PC-9 (cell line): ENCODE measurements at regions of chr2 and their contacts with region 1.

Region 1: GRCh38 chr2:118855451-118856279 is 8.2 kb upstream of the EN1 start:
- DNase-seq: peak; percentile 49 to 69
- H3K4me3 ChIP-seq: no peak overlapping the region; the same call in 1 of the 2 replicates
- H3K27ac ChIP-seq: no peak overlapping the region
- H3K4me1 ChIP-seq: peaks cover 9% of the 10 kb centered on the region
- H3K27me3 ChIP-seq: peaks cover 39% of the 10 kb centered on the region
- CTCF ChIP-seq: peak; percentile 98

Region 2: DNA sequence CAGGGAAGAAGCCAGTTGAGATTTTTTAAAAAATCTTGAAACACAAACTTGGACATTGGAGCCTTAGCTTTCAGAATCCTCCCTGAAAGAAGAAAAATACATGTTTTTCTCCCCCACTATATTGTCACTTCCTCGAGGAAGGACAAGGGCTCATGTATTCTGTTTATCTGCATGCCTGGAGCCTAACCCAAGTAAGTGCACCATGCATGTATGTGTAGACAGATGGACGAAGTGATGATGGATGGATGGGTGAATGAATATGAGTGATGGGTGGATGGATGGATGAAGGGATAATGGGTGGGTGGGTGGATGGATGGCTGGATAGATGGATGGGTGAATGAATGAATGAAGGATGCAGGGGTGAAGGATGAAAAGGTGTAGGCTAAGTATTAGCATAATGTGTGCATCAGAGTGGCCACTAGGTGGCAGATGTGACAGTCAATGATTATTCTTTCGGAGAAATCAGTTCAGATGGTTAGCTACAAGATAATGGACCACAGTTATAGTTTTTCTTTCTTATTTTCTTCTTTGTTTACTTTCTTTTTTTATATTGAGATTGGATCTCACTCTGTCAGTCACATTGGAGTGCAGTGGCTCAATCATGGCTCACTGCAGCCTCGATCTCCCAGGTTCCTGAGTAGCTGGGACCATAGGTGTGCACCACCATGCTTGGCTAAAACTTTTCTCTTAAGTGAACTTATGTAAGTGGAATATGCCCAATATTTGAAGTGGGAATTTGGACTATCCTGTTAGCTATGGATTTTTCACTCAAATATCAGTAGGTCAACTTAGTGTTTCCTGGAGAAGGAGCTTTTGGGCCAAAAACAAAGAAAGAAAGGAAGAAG is 823.3 kb before region 1 on chr2:
- CTCF ChIA-PET with region 1: no interaction called
- POLR2A ChIA-PET with region 1: no interaction called
- intact Hi-C with region 1: loop called (anchors 2 kb)
- DNase-seq: peak in 1 of 2 experiments; percentile 25
- H3K4me3 ChIP-seq: no peak overlapping the region
- H3K27ac ChIP-seq: no peak overlapping the region
- H3K4me1 ChIP-seq: no peaks in the 10 kb centered on the region
- H3K27me3 ChIP-seq: no peaks in the 10 kb centered on the region
- CTCF ChIP-seq: peak; percentile 97

Region 3: DNA sequence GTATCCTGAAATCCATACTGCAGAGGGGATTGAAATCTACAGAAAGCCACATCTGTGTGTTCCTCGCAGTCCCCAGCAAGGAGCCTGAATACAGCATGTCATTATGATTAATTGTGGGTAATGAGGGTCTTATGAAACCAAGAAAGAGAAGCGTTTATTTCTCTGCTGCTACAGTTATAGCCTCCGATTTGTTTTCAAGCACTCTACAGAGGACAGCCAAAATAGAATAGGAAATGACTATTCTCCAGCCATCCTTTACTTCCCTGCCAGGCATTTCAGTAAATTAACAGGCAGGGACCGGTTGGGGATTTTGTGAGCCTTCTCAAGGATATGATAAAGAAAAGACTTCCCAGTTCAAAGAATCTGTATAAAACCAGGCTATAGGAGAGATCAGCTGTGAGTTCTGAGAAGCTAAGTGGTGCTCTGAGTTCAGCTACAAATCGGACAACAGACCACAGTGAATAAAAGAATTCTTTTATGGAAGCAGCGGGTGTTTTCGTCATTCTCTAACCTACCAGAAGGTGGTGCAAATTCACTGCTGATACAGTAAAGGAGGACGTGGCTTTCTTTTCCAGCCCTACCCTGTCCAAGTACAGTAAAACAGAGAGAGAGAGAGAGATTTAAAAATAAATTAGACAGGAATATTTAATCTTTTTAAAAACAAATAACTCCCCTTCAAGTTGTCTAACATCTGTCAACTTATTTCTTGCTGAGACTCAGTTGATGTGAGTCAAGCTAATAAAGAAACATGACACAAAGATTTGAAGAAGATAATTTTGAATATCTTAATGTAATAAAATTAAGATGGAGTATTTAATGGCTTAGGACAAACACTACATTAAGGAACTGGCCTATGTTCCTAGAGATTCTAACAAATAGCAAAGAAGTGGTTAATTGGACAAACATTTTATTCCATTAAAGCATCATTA is 633.7 kb before region 1 on chr2:
- CTCF ChIA-PET with region 1: no interaction called
- POLR2A ChIA-PET with region 1: no interaction called
- intact Hi-C with region 1: loop called (anchors 1 kb)
- DNase-seq: peak; percentile 49 to 64
- H3K4me3 ChIP-seq: no peak overlapping the region
- H3K27ac ChIP-seq: no peak overlapping the region
- H3K4me1 ChIP-seq: peaks cover 4% of the 10 kb centered on the region
- H3K27me3 ChIP-seq: no peaks in the 10 kb centered on the region
- CTCF ChIP-seq: peak; percentile 91